Activated naive CD4-positive, alpha-beta T cell treated with anti-CD3 and anti-CD28 coated beads, Interleukin-2, amount 10 ng/mL, durations not matched to agents 7 days and 5 days (primary cell): ENCODE measurements at regions of chr9 and their contacts with region 1.

Region 1: DNA sequence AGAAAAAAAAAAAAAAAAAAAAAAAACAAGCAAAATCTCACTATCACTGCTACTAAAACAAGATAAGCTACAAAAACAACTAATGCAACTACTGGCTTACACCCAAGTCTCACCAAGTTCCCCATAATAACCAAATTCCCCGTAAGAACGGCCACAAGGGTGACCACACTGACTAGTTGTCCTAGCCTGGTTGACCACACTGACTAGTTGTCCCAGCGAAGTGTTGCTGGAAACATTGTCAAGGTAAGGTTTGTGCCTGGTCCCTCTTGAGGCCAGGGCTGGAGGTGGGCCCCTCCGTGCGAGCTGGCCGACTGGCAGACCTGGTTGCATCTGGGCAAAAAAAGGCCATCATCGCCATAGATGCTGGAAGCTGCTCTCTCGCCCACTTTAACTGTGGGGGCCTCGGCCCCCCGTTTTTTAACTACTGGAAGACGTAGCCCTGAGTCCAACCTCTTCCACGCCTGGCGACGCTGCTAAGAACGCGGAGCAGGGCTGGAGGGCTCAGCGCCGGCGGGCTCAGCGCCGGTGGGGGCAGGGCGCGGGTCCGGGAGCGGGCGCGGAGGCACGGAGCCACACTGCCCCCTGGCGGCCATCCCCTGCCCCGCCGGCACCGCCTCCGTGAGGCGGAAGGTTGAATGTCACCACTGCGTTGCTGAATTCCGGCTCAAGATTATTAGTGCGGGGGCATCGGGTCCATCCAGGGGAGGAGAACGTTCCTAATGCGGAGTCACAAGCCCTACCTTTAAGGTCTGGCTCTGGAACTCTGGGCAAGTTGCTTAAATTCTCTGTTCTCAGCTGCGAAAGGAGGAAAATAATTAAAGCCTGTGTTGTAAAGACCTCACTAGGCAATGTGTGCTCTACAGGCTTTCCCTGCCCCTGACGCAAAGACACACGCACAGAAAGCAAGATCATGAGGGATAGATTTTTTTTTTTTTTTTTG is 84.0 kb downstream of the HSD17B3 start:
- DNase-seq: peak; percentile 71
- H3K4me3 Mint-ChIP-seq: peak overlapping the region; percentile 14
- H3K27ac Mint-ChIP-seq: peak overlapping the region; percentile 52
- H3K4me1 Mint-ChIP-seq: peaks cover 13% of the 10 kb centered on the region
- H3K27me3 Mint-ChIP-seq: peaks cover 90% of the 10 kb centered on the region

Region 2: DNA sequence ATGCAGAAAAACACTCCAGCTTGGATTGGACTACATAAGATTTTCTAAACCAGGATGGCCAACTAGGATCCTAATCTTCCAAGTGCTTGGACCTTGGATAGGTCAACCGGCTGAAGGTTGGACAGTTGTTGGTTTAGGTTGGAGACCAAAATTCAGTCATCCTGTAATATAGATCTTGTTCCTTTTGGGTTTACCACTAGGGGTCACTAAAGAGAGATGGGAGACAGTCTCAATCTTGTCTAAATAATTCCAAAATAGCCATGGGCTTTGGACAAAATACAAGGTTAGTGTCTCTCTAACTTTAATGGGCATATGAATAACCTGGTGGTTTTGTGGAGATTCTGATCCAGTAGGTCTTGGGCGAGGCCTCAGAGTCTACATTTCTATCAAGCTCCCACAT is 491.3 kb before region 1 on chr9:
- CTCF ChIA-PET with region 1: interaction called, 16 read pairs
- DNase-seq: no peak
- H3K4me3 Mint-ChIP-seq: no peak overlapping the region
- H3K27ac Mint-ChIP-seq: no peak overlapping the region
- H3K4me1 Mint-ChIP-seq: peaks cover 37% of the 10 kb centered on the region
- H3K27me3 Mint-ChIP-seq: peaks cover 40% of the 10 kb centered on the region

Region 3: GRCh38 chr9:96006961-96007360 is 211.1 kb before region 1 on chr9:
- CTCF ChIA-PET with region 1: no interaction called
- DNase-seq: no peak
- H3K4me3 Mint-ChIP-seq: no peak overlapping the region
- H3K27ac Mint-ChIP-seq: no peak overlapping the region
- H3K4me1 Mint-ChIP-seq: peaks cover 36% of the 10 kb centered on the region
- H3K27me3 Mint-ChIP-seq: no peaks in the 10 kb centered on the region